Left ventricle myocardium superior (tissue), 1 donor: ENCODE measurements at regions of chr9 and their contacts with region 1.

Region 1: GRCh38 chr9:113523421-113524236 is 60.1 kb downstream of the RGS3 start:
- DNase-seq: peak; percentile 67
- ATAC-seq: peak; percentile 50

Region 2: DNA sequence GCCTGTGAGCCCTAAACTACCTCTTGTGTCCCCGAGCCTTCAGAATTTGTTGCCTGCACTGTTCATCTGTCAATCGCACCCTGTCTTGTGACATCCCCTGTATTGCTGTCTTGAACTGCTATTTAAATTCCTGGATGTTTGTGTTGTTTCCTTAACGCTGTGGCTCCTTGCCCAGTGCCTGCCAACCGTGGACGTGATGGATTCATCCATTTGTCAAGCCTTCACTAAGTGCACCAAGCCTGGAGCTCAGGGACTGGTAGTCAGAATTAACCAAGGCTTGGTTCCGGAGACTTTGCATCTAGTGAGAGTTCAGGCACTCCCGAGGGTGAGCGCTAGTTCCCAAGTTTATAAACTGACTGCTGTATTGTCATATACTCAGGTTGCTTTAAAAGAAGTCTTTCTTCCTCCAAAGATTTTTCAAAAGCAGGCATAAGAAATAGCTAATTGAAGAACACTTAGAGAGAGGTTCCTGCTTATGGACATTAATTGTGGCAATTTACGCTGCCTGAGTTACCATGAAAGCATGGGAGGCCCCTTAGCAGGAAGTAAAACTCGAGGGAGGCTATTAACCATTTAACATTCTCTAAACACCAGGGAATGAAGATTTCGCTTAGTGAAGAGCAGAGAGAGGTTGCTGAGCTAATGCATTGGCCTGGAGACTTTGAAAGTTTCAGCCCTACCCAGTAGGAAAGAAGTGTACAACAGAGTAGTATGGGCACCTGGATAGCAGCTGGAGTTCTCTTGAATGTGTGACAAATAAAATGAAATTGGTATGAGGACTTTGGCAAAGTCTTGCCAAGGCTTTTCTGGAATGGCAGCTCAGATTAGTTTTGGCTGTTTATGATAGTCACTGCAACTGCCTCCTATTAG is 31.1 kb before region 1 on chr9:
- intact Hi-C with region 1: no loop called
- DNase-seq: peak; percentile 59
- ATAC-seq: peak; percentile 64

Region 3: GRCh38 chr9:113578882-113579282 is 55.3 kb after region 1 on chr9:
- intact Hi-C with region 1: loop called (anchors 10 kb)
- DNase-seq: peak; percentile 56
- ATAC-seq: no peak

Region 4: DNA sequence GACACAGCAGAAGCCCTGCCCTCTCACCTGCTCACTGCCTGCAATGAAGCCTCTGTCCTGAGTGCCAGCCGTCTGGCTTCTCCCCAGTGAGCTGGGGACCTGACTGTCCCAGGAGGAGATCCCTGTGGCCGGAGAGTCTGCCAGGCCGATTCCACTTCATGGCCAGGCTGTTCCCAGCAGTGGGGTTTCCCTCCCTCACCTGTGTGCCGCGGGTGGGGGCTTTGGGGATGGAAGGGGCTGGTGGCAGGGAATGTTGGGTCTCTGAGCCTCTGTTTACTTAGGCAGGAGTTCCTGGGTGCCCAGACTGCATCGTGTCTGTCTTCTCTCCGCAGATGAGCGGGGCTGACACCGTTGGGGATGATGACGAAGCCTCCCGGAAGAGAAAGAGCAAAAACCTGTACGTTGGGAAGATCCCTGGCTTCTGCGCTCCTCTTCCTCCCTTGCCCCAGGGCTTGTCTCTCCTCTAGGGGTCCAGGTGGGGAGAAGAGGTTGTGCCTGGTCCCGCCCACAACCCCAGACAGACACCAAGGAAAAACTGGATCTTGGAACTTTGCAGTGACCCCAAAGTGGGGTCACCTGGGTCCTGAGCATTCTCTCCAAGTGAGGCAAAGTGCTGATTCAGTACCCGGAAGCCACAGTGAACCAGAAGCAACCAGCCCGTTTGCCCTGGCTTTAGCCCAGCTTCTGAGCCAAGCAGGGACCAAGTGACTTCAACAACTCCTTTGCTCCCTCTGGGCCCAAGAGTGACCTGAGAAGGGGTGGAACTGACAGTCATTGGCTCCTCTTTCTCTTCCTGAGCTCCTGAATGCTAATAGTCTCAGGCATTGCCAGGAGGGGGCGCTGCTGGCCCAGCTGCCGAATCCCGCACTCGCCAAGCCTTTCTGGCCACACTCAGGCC is 67.6 kb after region 1 on chr9:
- intact Hi-C with region 1: no loop called
- DNase-seq: peak; percentile 91
- ATAC-seq: peak; percentile 23